ENCODE measurements at regions of chr2 and their contacts with region 1.

Region 1: DNA sequence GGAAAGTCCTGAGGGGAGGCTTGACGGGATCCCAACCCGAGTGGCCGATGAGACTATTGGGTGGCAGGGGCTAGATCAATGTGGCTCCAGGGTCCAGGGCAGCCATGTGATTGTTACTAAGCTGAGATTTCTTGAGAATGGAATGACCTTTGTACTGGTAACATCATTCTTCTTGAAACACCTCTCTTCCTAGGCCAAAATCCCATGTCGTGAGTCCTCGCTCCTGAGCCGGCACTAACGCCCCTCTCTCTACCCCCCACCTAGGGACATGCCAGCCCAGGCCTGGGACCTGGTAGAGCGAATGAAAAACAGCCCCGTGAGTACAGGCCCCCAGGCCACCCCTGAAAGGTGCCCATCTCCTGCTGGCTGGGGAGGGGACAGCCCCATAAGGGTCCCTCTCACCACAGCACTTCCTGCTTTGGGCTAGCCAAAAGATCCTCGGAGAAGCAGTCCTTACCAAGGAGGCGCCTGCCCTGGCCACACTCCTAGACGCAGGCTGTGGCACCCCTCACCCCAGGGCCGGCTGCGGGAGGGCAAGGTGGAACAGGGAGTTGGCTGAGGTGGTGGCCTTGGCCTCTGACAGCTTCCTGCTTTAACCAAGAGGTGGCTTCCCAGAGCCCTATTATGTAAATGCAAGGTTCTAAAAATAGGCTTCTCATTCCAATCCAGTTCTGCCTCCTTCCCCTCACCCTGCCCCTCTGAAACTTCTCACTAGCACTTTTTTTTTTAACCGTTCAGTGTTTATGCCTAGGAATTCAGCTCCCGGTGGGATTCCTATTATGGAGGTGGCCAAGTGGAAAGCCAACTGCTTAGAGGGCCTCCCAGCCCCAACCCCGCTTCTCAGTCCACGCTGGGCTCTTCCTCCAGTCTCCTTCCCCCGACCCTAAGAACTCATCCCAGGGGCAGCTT is 126.6 kb upstream of the PPP1CB start:
- DNase-seq: peak; percentile 87
- H3K4me3 ChIP-seq: peak overlapping the region in 2 of 4 donors; percentile 6 to 23
- H3K27ac ChIP-seq: peak overlapping the region; percentile 90 to 94 (median 92)
- H3K4me1 ChIP-seq: peaks cover 0 to 87% (median 76%) of the 10 kb centered on the region in 4 donors
- H3K27me3 ChIP-seq: no peaks in the 10 kb centered on the region
- CTCF ChIP-seq: peak in 1 of 4 experiments; percentile 14
- EP300 ChIP-seq: peak in 2 of 4 donors; percentile 24 to 43
- POLR2A ChIP-seq: no peak

Region 2: DNA sequence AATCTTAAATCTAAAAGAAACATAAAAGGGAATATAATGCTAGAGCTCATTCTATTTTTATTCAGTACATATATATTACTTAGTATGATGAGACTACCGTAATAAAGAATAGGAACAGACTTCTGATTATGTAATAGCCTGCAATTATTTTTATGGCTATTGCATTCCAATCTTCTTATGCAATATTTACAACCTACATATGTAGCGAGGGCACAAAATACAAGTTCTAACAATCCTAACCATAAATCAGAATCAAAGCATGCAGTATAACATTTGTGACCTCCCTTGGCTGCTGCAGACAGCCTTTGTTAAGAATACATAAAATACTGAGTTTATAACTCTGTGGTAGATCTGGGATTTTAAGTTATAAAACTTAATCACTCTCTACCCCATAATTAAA is 557.0 kb before region 1 on chr2:
- intact Hi-C with region 1: no loop called
- DNase-seq: no peak
- H3K4me3 ChIP-seq: no peak overlapping the region
- H3K27ac ChIP-seq: no peak overlapping the region
- H3K4me1 ChIP-seq: no peaks in the 10 kb centered on the region
- H3K27me3 ChIP-seq: no peaks in the 10 kb centered on the region
- CTCF ChIP-seq: no peak
- EP300 ChIP-seq: no peak
- POLR2A ChIP-seq: no peak

Region 3: GRCh38 chr2:28594289-28595108 is 30.5 kb before region 1 on chr2:
- intact Hi-C with region 1: loop called (anchors 2 kb)
- DNase-seq: peak; percentile 96
- H3K4me3 ChIP-seq: peak overlapping the region in 1 of 4 donors; percentile 14
- H3K27ac ChIP-seq: peak overlapping the region; percentile 81 to 93 (median 85)
- H3K4me1 ChIP-seq: peaks cover 0 to 29% (median 25%) of the 10 kb centered on the region in 4 donors
- H3K27me3 ChIP-seq: no peaks in the 10 kb centered on the region
- CTCF ChIP-seq: peak; percentile 83 to 94 (median 87)
- EP300 ChIP-seq: no peak
- POLR2A ChIP-seq: no peak

Region 4: DNA sequence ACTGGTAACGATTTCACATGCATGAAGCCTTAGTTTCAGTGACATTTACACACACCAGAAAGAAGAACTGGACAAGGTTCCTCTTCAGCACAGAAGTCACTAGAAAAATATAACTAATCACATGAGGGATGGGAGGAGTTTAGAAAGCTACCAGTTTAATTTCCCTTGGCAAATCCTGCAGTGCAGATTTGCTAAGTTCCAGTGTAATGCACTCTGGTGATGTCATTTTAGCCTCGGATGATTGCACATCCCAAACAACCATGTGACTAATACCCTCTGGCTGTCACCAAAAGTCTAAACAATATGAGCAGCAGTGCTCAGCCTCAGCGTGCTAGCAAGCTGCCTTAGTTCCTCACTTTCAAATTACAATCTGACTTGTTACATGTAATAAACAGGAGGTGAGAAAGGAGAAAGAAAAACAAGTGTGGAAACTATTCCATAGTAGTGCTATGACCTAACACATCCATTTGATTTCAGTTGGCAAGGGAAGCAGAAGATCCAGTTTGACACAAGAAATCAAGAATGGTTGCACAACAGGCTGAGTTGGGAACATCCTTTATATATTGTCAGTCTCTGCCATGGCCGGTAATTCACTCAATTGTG is 91.3 kb after region 1 on chr2:
- intact Hi-C with region 1: loop called (anchors 2 kb)
- DNase-seq: peak; percentile 87
- H3K4me3 ChIP-seq: no peak overlapping the region
- H3K27ac ChIP-seq: peak overlapping the region; percentile 72 to 80 (median 74)
- H3K4me1 ChIP-seq: peaks cover 0 to 22% (median 19%) of the 10 kb centered on the region in 4 donors
- H3K27me3 ChIP-seq: no peaks in the 10 kb centered on the region
- CTCF ChIP-seq: no peak
- EP300 ChIP-seq: peak in 1 of 4 donors; percentile 38
- POLR2A ChIP-seq: no peak

Measured in sigmoid colon (tissue), 7 donors.